CD14-positive monocyte (primary cell): ENCODE measurements at regions of chr2 and their contacts with region 1.

Region 1: GRCh38 chr2:19863303-19864041 is 38.3 kb downstream of the TTC32 start:
- DNase-seq: peak; percentile 54 to 67 (median 67)
- H3K4me3 ChIP-seq: no peak overlapping the region
- H3K4me3 Mint-ChIP-seq: no peak overlapping the region
- H3K27ac ChIP-seq: no peak overlapping the region
- H3K27ac Mint-ChIP-seq: no peak overlapping the region
- H3K4me1 ChIP-seq: peaks cover 7 to 12% of the 10 kb centered on the region in 2 donors
- H3K4me1 Mint-ChIP-seq: peaks cover 9% of the 10 kb centered on the region
- H3K27me3 ChIP-seq: peaks cover 0 to 2% of the 10 kb centered on the region in 2 donors
- H3K27me3 Mint-ChIP-seq: peaks cover 11 to 19% (median 14%) of the 10 kb centered on the region in 3 donors
- CTCF ChIP-seq: peak; percentile 98

Region 2: GRCh38 chr2:18387441-18388206 is 1475.8 kb before region 1 on chr2:
- intact Hi-C with region 1: loop called (anchors 5 kb)
- DNase-seq: peak; percentile 23 to 47 (median 46)
- H3K4me3 ChIP-seq: no peak overlapping the region
- H3K4me3 Mint-ChIP-seq: no peak overlapping the region
- H3K27ac ChIP-seq: no peak overlapping the region
- H3K27ac Mint-ChIP-seq: peak overlapping the region in 1 of 7 donors; percentile 67
- H3K4me1 ChIP-seq: no peaks in the 10 kb centered on the region
- H3K4me1 Mint-ChIP-seq: no peaks in the 10 kb centered on the region
- H3K27me3 ChIP-seq: no peaks in the 10 kb centered on the region
- H3K27me3 Mint-ChIP-seq: peaks cover 1 to 2% (median 1%) of the 10 kb centered on the region in 3 donors
- CTCF ChIP-seq: peak; percentile 98

Region 3: DNA sequence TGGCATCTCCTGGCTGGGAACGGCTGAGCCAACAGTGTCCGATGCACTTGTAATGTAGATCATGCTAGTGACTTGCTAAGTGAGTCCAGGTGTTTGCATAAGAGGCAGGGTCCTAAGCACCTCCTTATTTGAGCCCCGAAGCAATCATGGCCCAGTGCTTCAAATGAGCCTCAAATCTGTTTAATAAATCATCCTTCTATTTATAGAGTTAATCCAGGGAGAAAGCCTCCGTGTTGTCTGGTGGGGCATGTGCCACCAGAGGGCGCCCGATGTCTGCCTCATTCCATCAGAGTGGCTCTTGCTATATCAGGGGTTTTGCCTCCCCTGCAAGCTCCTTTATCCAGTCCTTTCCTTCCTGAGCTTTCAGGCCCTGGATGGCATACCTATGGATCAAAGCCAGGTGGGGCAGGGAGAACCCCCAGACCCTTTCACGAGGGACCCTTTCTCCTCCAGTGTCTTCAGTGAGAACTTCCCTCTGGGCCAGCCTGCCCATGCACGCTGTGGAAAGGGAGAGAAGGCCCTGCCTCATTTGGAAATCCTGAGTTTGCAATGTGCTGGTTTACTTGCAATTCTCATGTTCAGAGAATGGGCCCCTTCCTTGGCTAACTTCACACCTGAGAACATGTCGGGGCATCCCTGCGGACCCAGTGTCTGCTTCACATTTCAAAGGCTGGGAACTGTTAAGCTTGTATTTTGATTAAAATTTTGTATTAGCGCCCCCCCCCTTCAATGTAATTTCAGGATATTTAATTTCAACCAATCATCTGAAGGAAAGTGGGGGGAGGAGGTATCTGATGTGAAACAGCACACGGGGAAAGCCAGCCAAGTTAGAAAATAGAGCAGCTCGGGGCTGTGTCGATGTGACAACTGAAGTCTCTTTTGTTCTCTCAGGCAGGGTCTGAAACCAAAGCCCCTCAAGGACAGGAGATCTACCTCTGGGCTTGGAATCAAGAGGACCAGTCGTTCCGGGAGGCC is 1342.7 kb before region 1 on chr2:
- intact Hi-C with region 1: loop called (anchors 2 kb)
- DNase-seq: peak; percentile 36 to 42 (median 39)
- H3K4me3 ChIP-seq: no peak overlapping the region
- H3K4me3 Mint-ChIP-seq: no peak overlapping the region
- H3K27ac ChIP-seq: no peak overlapping the region
- H3K27ac Mint-ChIP-seq: peak overlapping the region in 1 of 7 donors; percentile 36
- H3K4me1 ChIP-seq: no peaks in the 10 kb centered on the region
- H3K4me1 Mint-ChIP-seq: no peaks in the 10 kb centered on the region
- H3K27me3 ChIP-seq: no peaks in the 10 kb centered on the region
- H3K27me3 Mint-ChIP-seq: peaks cover 0 to 10% (median 9%) of the 10 kb centered on the region in 3 donors
- CTCF ChIP-seq: peak; percentile 84

Region 4: DNA sequence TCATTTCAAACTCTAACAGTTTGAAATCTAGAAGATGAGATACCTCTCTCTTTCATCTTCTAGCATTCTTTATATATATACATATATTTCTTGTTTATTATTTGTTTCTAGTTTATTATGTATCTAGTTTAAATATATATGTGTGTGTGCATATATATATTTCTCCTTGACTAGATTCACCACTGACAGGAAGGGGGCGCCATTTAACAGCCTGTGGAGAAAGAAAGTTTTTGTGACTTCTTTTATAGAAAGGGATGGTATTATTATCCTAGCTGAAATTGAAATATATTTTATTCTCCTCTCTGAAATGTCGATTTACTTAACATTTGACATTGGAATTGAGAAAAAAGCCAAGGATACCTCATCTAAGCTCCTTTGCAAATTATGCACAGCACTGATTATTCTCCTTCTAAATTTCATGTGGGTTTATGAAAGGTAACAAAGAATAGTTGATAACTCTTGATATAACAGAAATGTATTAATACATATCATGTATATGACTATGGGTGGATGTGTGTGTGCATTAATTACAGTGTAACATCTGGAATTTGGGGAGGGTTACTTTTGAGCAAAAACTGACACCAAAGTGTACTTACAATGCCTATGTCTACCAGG is 1113.5 kb before region 1 on chr2:
- intact Hi-C with region 1: loop called (anchors 5 kb)
- DNase-seq: no peak
- H3K4me3 ChIP-seq: no peak overlapping the region
- H3K4me3 Mint-ChIP-seq: no peak overlapping the region
- H3K27ac ChIP-seq: no peak overlapping the region
- H3K27ac Mint-ChIP-seq: no peak overlapping the region
- H3K4me1 ChIP-seq: no peaks in the 10 kb centered on the region
- H3K4me1 Mint-ChIP-seq: no peaks in the 10 kb centered on the region
- H3K27me3 ChIP-seq: no peaks in the 10 kb centered on the region
- H3K27me3 Mint-ChIP-seq: peaks cover 2 to 4% (median 3%) of the 10 kb centered on the region in 3 donors
- CTCF ChIP-seq: peak; percentile 46